HEK293 (cell line): ENCODE measurements at regions of chr2 and their contacts with region 1.

Region 1: GRCh38 chr2:126971481-126972278 is 73.0 kb downstream of the TEX51 start:
- H3K4me3 ChIP-seq: no peak overlapping the region
- H3K27ac ChIP-seq: no peak overlapping the region
- H3K4me1 ChIP-seq: no peaks in the 10 kb centered on the region
- CTCF ChIP-seq: peak; percentile 82

Region 2: DNA sequence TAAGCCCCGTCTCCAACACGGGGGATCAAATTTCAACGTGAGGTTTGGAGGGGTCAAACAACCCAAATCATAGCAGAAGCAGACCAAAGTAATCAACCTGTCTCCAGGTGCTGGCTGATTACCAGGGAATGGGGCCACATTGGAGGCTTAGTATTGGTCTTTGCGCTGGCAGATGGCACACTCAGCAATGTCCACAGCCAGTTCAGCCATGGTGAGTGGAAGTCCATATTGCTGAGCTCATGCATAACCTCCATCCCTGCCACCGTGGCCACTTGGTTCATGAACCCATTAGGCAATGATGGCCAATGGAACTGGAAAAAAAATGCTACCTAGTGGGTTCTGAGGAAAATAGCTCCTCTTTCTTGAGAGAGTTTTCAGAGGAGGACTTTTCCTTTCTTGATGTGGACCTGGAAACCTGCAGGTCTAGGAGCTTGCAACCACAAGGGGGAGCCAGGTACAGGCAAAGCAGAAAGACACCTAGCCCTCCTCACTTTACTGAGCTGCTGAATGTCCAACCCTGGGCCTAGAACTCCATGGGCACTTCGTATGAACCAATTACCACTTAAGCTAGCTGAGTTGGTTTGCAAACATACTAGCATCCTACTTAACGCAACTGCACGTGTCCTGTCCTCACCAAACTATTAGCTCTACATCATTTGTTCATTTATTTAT is 443.7 kb before region 1 on chr2:
- CTCF ChIA-PET with region 1: interaction called, 31 read pairs
- POLR2A ChIA-PET with region 1: no interaction called
- H3K4me3 ChIP-seq: no peak overlapping the region
- H3K27ac ChIP-seq: no peak overlapping the region
- H3K4me1 ChIP-seq: no peaks in the 10 kb centered on the region
- CTCF ChIP-seq: no peak

Region 3: GRCh38 chr2:126686841-126687485 is 284.7 kb before region 1 on chr2:
- CTCF ChIA-PET with region 1: no interaction called
- POLR2A ChIA-PET with region 1: no interaction called
- H3K4me3 ChIP-seq: no peak overlapping the region
- H3K27ac ChIP-seq: no peak overlapping the region
- H3K4me1 ChIP-seq: no peaks in the 10 kb centered on the region
- CTCF ChIP-seq: no peak

Region 4: DNA sequence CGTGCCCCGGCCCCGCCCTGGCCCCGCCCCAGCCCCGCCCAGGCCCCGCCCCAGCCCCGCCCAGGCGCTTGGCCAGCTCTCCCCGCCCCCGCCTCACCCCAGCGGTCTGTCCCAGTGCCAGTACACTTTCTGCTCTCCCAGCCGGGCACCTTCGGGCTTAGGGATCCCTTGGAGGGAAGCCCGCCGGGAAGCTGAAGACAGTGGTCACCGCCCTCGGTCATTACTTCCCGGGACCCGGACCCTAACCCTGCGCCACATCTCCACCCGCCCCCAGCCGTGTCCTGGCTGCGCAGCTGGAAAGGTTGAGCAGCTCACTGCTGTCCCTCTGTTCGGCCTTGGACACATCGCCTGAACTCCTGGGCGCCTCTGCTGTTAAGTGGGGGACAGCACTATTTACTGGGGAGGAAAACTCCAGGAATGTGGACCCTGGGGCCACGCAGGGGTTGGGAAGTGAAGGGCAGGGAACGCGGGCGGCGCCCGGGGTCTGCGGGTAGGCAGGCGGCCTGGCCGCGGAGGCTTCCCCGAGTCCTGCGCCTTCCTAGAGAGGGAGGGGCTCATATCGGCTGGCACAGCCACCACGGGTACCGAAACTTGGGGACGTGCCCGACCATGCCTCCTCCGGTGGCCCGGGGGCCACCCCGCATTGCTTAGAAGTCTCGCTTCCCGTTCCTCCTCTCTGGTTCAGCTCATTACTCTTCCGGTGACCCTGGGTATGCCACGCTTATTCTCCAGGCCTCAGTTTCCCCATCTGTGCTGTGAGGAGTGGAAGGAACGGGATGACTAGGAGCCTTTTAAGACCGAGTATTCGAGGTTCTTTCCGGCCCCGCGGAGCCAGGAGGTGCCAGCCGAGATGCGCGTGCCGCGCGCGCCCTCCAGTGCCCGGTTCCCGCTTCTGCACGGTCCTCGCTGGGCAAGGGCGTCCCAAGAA is 194.7 kb before region 1 on chr2:
- CTCF ChIA-PET with region 1: interaction called, 24 read pairs
- POLR2A ChIA-PET with region 1: no interaction called
- H3K4me3 ChIP-seq: peak overlapping the region; percentile 33
- H3K27ac ChIP-seq: no peak overlapping the region
- H3K4me1 ChIP-seq: no peaks in the 10 kb centered on the region
- CTCF ChIP-seq: peak; percentile 79

Region 5: GRCh38 chr2:126858013-126858412 is 113.7 kb before region 1 on chr2:
- CTCF ChIA-PET with region 1: no interaction called
- POLR2A ChIA-PET with region 1: no interaction called
- H3K4me3 ChIP-seq: no peak overlapping the region
- H3K27ac ChIP-seq: no peak overlapping the region
- H3K4me1 ChIP-seq: no peaks in the 10 kb centered on the region
- CTCF ChIP-seq: no peak

Region 6: DNA sequence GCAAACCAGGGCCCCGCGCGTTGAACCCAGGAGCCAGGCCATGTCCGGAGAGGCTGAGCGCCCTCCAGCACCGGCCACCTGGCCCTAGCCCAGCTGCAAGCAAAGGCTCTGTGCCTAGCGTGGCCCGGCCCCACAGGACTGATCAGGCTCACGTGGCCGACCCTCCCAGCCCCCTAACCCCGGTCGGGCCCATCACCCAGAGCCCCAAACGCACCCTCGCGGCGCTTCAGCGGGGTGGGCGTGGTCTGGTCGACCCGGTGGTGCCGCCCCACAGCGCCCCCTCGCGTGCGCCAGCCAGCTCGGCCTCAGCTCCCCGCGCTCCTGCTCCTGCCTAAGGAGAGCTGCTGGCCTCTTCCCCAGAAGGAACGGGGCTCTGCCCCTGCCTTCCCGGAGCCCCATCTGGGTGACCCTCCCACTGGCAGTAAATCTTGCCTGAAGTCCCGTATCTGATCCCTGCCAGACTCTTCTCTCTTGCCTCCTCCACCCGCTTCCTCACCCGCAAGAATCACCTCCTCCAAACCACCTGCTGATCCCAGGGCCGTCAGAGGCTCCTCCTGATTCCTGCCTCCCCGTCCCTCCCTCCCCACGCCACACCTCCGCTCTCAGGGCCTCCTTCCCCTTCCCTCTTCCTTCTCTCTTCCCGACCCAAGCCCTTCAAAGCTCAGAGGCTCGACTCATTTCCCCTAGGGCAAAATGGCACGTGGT is 85.3 kb before region 1 on chr2:
- CTCF ChIA-PET with region 1: interaction called, 13 read pairs
- POLR2A ChIA-PET with region 1: no interaction called
- H3K4me3 ChIP-seq: peak overlapping the region; percentile 13; the same call in 1 of the 2 replicates
- H3K27ac ChIP-seq: no peak overlapping the region
- H3K4me1 ChIP-seq: no peaks in the 10 kb centered on the region
- CTCF ChIP-seq: peak; percentile 91

Region 7: GRCh38 chr2:126921066-126921465 is 50.6 kb before region 1 on chr2:
- CTCF ChIA-PET with region 1: no interaction called
- POLR2A ChIA-PET with region 1: no interaction called
- H3K4me3 ChIP-seq: no peak overlapping the region
- H3K27ac ChIP-seq: no peak overlapping the region
- H3K4me1 ChIP-seq: no peaks in the 10 kb centered on the region
- CTCF ChIP-seq: no peak